Activated CD4-positive, alpha-beta T cell treated with anti-CD3 and anti-CD28 coated beads for 36 hours (primary cell): ENCODE measurements at regions of chr5 and their contacts with region 1.

Region 1: GRCh38 chr5:56814963-56815658 is at the start of gene MAP3K1:
- DNase-seq: peak; percentile 86
- ATAC-seq: peak; percentile 57
- H3K4me3 Mint-ChIP-seq: peak within 1 kb of the TSS; percentile 76
- H3K27ac Mint-ChIP-seq: peak within 1 kb of the TSS; percentile 87
- H3K4me1 Mint-ChIP-seq: peaks cover 33% of the 10 kb centered on the region
- H3K27me3 Mint-ChIP-seq: no peaks in the 10 kb centered on the region
- total RNA-seq, gene MAP3K1: 22.3 to 22.9 TPM

Region 2: GRCh38 chr5:55534436-55535198 is 1280.5 kb before region 1 on chr5 and contains the start of gene PLPP1:
- CTCF ChIA-PET with region 1: no interaction called
- POLR2A ChIA-PET with region 1: no interaction called
- intact Hi-C with region 1: loop called in 1 of 2 experiments (anchors 10 kb)
- DNase-seq: peak; percentile 91
- ATAC-seq: peak; percentile 89
- H3K4me3 Mint-ChIP-seq: peak within 1 kb of the TSS; percentile 79
- H3K27ac Mint-ChIP-seq: peak within 1 kb of the TSS; percentile 88
- H3K4me1 Mint-ChIP-seq: peaks cover 27% of the 10 kb centered on the region
- H3K27me3 Mint-ChIP-seq: no peaks in the 10 kb centered on the region
- total RNA-seq, gene PLPP1: 7.9 to 8.2 TPM

Region 3: GRCh38 chr5:56692359-56693219 is 122.5 kb before region 1 on chr5:
- CTCF ChIA-PET with region 1: no interaction called
- POLR2A ChIA-PET with region 1: no interaction called
- intact Hi-C with region 1: loop called in 1 of 2 experiments (anchors 5 kb)
- DNase-seq: no peak
- ATAC-seq: peak; percentile 30
- H3K4me3 Mint-ChIP-seq: peak overlapping the region; percentile 20
- H3K27ac Mint-ChIP-seq: peak overlapping the region; percentile 80
- H3K4me1 Mint-ChIP-seq: peaks cover 82% of the 10 kb centered on the region
- H3K27me3 Mint-ChIP-seq: no peaks in the 10 kb centered on the region

Region 4: DNA sequence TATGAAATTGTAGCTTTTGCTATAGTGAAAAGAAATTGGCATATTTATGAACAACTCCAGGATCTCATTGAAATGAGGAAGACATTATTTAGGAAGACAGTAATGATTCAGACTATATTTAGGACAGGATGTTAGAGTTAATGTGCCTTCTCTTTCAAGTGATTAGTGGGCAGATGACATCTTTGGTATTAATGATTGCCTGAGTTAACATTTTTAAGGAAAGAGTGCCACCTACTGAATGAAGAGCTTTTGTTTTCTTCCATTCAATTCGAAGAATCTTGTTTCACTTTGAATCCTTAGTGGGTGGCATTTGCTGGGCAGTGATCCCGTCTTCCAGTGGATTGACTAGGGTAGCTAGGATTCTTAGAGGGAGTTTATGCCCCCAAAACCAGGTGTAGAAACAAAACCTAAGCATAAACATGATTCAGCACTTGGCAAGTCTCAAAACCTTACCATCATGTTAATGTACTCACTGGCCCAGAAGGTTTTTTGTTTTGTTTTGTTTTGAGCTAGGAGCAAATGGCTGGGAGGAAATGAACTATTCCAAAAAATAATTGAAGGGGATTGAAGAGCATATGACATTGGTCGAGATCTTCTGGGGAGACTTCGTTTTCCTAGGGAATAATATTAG is 23.4 kb after region 1 on chr5:
- CTCF ChIA-PET with region 1: interaction called, 14 read pairs
- POLR2A ChIA-PET with region 1: no interaction called
- intact Hi-C with region 1: no loop called
- DNase-seq: no peak
- ATAC-seq: peak; percentile 67
- H3K4me3 Mint-ChIP-seq: peak overlapping the region; percentile 37
- H3K27ac Mint-ChIP-seq: peak overlapping the region; percentile 68
- H3K4me1 Mint-ChIP-seq: peaks cover 84% of the 10 kb centered on the region
- H3K27me3 Mint-ChIP-seq: no peaks in the 10 kb centered on the region

Region 5: GRCh38 chr5:56909294-56910209 is 94.4 kb after region 1 on chr5 and contains the start of gene SETD9:
- CTCF ChIA-PET with region 1: interaction called, 3 read pairs
- POLR2A ChIA-PET with region 1: no interaction called
- intact Hi-C with region 1: loop called in 1 of 2 experiments (anchors 1 kb)
- DNase-seq: peak; percentile 97
- ATAC-seq: peak; percentile 92
- H3K4me3 Mint-ChIP-seq: peak within 1 kb of the TSS; percentile 90
- H3K27ac Mint-ChIP-seq: peak within 1 kb of the TSS; percentile 94
- H3K4me1 Mint-ChIP-seq: peaks cover 20% of the 10 kb centered on the region
- H3K27me3 Mint-ChIP-seq: peaks cover 5% of the 10 kb centered on the region
- total RNA-seq, gene SETD9: 5.4 to 6.8 TPM